ENCODE measurements at regions of chr12 and their contacts with region 1.

Region 1: GRCh38 chr12:53287741-53288216 is 7.6 kb upstream of the PFDN5 start:
- DNase-seq: peak in 8 of 10 donors; percentile 32 to 76 (median 56)
- H3K4me3 ChIP-seq: no peak overlapping the region
- H3K27ac ChIP-seq: no peak overlapping the region
- H3K27me3 ChIP-seq: no peaks in the 10 kb centered on the region
- CTCF ChIP-seq: peak; percentile 34 to 91 (median 70)

Region 2: GRCh38 chr12:53213348-53213747 is 74.4 kb before region 1 on chr12:
- intact Hi-C with region 1: loop called (anchors 1 to 5 kb)
- DNase-seq: peak; percentile 84 to 92 (median 89)
- H3K4me3 ChIP-seq: peak overlapping the region in 11 of 59 donors; percentile 6 to 46 (median 17)
- H3K27ac ChIP-seq: peak overlapping the region in 22 of 59 donors; percentile 4 to 75 (median 41)
- H3K27me3 ChIP-seq: no peaks in the 10 kb centered on the region
- CTCF ChIP-seq: peak; percentile 75 to 99 (median 97)